ENCODE measurements at regions of chr9 and their contacts with region 1.

Region 1: DNA sequence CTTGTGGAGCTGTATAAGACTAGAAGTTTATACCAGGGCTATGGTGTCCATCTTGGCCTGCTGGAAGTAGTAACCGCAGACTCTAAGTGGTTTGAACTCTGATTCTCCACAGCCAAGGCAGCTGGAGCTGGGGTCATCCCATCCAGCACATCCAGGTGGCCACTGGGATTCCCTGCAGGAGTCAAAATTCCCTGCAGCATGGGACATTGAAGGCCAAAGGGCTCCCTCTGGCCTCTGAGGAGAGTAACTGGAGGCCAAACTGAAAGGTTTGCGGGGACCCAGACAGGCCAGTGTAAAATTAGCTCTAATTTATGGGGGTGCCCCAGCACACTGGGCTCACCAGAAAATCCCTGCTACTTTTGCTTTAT is 12.2 kb upstream of the PRXL2C start:
- DNase-seq: no peak
- H3K4me3 ChIP-seq: no peak overlapping the region
- H3K27ac ChIP-seq: no peak overlapping the region
- H3K4me1 ChIP-seq: no peaks in the 10 kb centered on the region
- H3K27me3 ChIP-seq: no peaks in the 10 kb centered on the region

Region 2: GRCh38 chr9:96327694-96328352 is 339.5 kb before region 1 on chr9:
- CTCF ChIA-PET with region 1: interaction called, 19 read pairs
- POLR2A ChIA-PET with region 1: interaction called, 3 read pairs
- DNase-seq: peak; percentile 42 to 61 (median 59)
- H3K4me3 ChIP-seq: no peak overlapping the region
- H3K27ac ChIP-seq: no peak overlapping the region
- H3K4me1 ChIP-seq: no peaks in the 10 kb centered on the region
- H3K27me3 ChIP-seq: no peaks in the 10 kb centered on the region

Region 3: DNA sequence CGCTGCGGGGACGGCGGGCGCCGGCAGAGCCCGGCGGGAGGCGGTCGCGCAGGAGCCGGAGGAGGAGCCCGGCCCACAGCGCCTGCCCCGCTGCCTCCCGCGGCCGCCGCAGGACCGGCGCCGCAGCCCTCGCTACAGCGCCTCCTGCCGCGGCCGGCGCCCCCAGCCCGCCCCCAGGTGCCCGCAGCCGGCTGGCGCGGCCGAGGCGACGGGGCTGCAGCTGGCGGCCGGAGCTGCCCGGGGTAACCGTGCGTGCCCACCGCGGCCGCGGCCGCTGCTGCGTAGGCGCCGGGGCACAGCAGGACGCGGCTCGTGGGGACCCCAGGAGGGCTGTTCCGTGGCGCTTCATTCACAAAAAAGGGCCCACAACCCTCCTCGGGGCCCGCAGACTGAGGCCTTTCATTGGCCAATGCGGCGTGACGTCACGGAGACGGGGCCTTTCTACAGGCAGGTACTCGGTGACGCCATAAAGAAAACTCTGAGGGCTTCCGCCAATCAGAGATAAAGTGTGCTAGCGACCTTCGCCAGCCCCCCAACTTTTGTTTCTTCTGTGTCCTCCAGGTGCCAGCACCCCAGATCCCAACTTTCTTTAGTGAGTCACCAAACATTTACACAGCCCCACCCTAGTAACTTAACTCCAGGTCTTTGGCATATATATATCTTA is 47.7 kb before region 1 on chr9 and contains the start of gene CDC14B:
- CTCF ChIA-PET with region 1: no interaction called
- POLR2A ChIA-PET with region 1: no interaction called
- DNase-seq: peak; percentile 91 to 95 (median 94)
- H3K4me3 ChIP-seq: peak within 1 kb of the TSS; percentile 27 to 75 (median 68)
- H3K27ac ChIP-seq: no peak within 1 kb of the TSS
- H3K4me1 ChIP-seq: peaks cover 5 to 30% (median 23%) of the 10 kb centered on the region in 4 experiments
- H3K27me3 ChIP-seq: peaks cover 0 to 9% (median 3%) of the 10 kb centered on the region in 5 experiments

Region 4: DNA sequence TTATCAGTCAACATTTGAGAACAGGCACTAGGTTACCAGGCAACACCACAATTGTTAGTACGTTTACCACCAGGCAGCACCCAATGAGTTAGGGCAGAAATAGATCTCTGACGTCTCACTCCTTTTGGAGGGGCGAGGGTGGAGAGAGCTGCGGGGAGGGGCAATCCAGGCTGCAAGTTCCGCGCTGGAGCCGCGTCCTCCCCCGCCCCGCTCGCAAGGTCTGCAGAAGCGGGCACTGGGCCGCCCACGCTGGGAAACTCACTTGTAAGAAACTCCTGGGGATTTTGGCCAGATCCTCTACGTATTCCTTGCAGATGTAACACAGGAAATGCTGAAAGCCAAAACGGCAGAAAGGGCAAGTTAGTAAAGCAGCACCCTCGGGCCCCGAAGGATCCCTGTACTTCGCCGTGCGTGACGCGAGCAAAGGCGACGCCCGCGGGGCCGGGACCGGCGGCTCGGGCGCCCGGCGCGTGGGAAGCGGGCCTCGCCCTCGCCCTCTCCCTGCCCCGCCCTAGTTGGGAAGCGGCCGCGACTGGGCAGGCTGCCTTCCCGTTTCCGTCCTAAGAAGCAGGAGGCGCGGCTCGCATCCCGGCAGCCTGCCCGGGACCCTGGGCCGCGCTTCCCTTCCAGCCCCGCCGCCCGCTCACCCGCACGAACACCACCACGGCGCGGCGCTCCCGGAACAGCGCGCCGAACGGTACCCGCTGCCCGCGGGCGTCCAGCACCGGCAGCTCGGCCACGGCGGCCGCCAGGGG is 12.7 kb before region 1 on chr9:
- CTCF ChIA-PET with region 1: interaction called, 13 read pairs
- POLR2A ChIA-PET with region 1: no interaction called
- DNase-seq: peak; percentile 95 to 98 (median 97)
- H3K4me3 ChIP-seq: peak overlapping the region; percentile 68 to 86 (median 76)
- H3K27ac ChIP-seq: peak overlapping the region; percentile 90 to 93
- H3K4me1 ChIP-seq: peaks cover 6 to 19% (median 17%) of the 10 kb centered on the region in 4 experiments
- H3K27me3 ChIP-seq: no peaks in the 10 kb centered on the region

Region 5: GRCh38 chr9:96690966-96691725 is 23.8 kb after region 1 on chr9:
- CTCF ChIA-PET with region 1: no interaction called
- POLR2A ChIA-PET with region 1: no interaction called
- DNase-seq: no peak
- H3K4me3 ChIP-seq: no peak overlapping the region
- H3K27ac ChIP-seq: no peak overlapping the region
- H3K4me1 ChIP-seq: peaks cover 0 to 6% (median 1%) of the 10 kb centered on the region in 4 experiments
- H3K27me3 ChIP-seq: no peaks in the 10 kb centered on the region